ENCODE measurements at regions of chr6 and their contacts with region 1.

Region 1: GRCh38 chr6:17156112-17156921 is 54.5 kb downstream of the STMND1 start:
- DNase-seq: no peak
- H3K4me3 ChIP-seq: no peak overlapping the region
- H3K27ac ChIP-seq: no peak overlapping the region
- H3K4me1 ChIP-seq: no peaks in the 10 kb centered on the region
- H3K27me3 ChIP-seq: peaks cover 0 to 5% (median 0%) of the 10 kb centered on the region in 7 donors
- CTCF ChIP-seq: peak; percentile 47 to 83 (median 74)
- POLR2A ChIP-seq: no peak

Region 2: GRCh38 chr6:17086469-17086868 is 69.8 kb before region 1 on chr6:
- intact Hi-C with region 1: no loop called
- DNase-seq: no peak
- H3K4me3 ChIP-seq: no peak overlapping the region
- H3K27ac ChIP-seq: no peak overlapping the region
- H3K4me1 ChIP-seq: no peaks in the 10 kb centered on the region
- H3K27me3 ChIP-seq: peaks cover 0 to 4% (median 0%) of the 10 kb centered on the region in 7 donors
- CTCF ChIP-seq: peak in 8 of 11 experiments; percentile 26 to 65 (median 50)
- POLR2A ChIP-seq: no peak

Region 3: DNA sequence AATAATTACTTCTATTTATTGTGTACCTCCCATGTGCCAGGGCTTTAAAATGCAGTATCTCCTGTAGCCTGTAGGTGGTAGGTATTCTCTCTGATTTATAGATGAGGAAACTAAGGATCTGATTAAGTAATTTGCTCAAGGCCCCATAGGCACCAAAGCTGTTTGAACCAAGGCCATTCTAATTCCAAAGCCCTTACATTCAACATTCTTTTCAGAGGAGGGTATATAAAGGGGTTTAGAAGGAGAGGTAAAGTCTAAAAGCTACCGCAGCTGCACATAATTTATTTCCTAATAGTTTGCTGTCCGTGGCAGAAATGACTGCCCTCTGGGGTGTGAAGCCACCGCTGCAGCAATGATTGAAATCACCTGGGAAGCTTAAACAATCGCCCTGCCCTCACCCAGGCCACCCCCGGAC is 348.8 kb after region 1 on chr6:
- intact Hi-C with region 1: no loop called
- DNase-seq: no peak
- H3K4me3 ChIP-seq: no peak overlapping the region
- H3K27ac ChIP-seq: no peak overlapping the region
- H3K4me1 ChIP-seq: no peaks in the 10 kb centered on the region
- H3K27me3 ChIP-seq: peaks cover 0 to 5% (median 0%) of the 10 kb centered on the region in 7 donors
- CTCF ChIP-seq: peak in 2 of 11 experiments; percentile 17 to 22
- POLR2A ChIP-seq: no peak

Region 4: DNA sequence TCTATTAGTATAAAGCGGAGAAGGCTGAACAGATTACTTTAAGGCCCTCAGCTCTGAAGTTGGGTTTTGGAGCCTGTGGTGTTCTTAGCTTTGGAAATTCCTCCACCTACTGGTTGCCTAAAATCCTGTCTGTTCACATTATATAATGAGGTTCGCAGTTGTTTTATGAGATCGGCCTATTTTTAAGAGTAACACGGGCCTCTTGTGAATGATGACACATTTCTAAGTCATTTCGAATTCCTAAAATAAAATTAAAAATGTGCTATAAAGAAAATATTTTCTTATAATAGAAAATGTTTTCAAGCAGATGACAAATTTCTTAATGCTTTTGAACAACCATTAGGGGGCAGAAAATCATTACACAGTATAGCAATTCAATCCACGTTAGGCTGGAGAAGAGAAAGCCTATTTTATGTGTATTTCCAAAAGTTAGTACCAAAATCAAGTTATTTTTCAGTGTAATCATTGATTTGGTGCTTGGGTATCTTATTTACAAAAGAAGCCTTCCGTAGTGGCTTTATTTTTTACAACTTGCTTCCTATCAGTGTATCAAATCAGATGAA is 428.0 kb after region 1 on chr6:
- intact Hi-C with region 1: loop called (anchors 5 kb)
- DNase-seq: no peak
- H3K4me3 ChIP-seq: peak overlapping the region in 1 of 8 donors; percentile 3
- H3K27ac ChIP-seq: peak overlapping the region in 6 of 8 donors; percentile 5 to 60 (median 36)
- H3K4me1 ChIP-seq: peaks cover 0 to 31% (median 13%) of the 10 kb centered on the region in 6 donors
- H3K27me3 ChIP-seq: peaks cover 0 to 17% (median 5%) of the 10 kb centered on the region in 7 donors
- CTCF ChIP-seq: peak; percentile 23 to 79 (median 65)
- POLR2A ChIP-seq: no peak

Region 5: DNA sequence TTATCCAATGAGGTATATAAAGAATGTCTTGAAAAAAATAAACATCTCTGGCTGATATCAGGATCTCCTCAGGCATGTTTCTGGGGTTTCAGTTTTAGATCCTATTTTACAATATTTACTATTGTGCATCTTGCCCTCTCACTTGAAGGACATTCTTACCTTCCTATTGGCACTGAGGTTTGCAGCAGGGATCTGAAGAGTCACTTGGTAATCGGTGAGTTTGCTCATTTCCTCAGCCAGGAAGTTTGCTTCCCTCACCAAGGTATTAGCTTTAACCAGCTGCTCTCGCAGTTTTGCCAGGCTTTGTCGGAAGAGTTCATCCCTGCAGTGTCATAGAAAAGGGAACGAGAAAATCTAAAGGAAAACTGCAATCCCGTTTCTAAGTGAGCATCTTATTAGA is 652.3 kb after region 1 on chr6:
- intact Hi-C with region 1: loop called (anchors 10 kb)
- DNase-seq: no peak
- H3K4me3 ChIP-seq: no peak overlapping the region
- H3K27ac ChIP-seq: no peak overlapping the region
- H3K4me1 ChIP-seq: peaks cover 0 to 6% (median 0%) of the 10 kb centered on the region in 6 donors
- H3K27me3 ChIP-seq: no peaks in the 10 kb centered on the region
- CTCF ChIP-seq: no peak
- POLR2A ChIP-seq: no peak

Region 6: DNA sequence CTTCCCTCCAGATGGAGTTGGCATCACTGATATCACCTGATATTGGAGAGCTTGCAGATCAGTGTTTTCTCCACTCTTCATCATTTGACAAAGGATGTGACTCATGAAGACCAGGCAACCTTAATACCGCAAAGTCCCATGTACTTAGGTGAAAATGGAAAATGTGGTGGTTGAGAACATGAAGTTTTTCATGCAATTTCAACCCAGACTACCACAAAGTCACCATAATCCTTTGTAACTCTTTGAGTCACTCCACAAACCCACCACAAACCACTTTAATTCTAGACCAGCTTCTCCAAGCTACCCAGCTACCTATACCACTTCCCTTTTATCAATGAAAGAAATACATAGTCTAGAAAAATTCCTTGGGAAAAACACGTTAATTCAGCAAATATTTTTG is 959.0 kb after region 1 on chr6:
- intact Hi-C with region 1: loop called (anchors 10 kb)
- DNase-seq: no peak
- H3K4me3 ChIP-seq: no peak overlapping the region
- H3K27ac ChIP-seq: no peak overlapping the region
- H3K4me1 ChIP-seq: no peaks in the 10 kb centered on the region
- H3K27me3 ChIP-seq: no peaks in the 10 kb centered on the region
- CTCF ChIP-seq: no peak
- POLR2A ChIP-seq: no peak

Measured in spleen (tissue), 13 donors.